Caco-2 (cell line): ENCODE measurements at regions of chr17 and their contacts with region 1.

Region 1: GRCh38 chr17:41521574-41522261 is 3.0 kb upstream of the KRT15 start:
- DNase-seq: peak; percentile 97 to 99
- H3K4me3 ChIP-seq: no peak overlapping the region
- H3K4me3 Mint-ChIP-seq: peak overlapping the region; percentile 68
- H3K27ac Mint-ChIP-seq: peak overlapping the region; percentile 97
- H3K4me1 ChIP-seq: peaks cover 66% of the 10 kb centered on the region
- H3K4me1 Mint-ChIP-seq: peaks cover 51% of the 10 kb centered on the region
- H3K27me3 ChIP-seq: no peaks in the 10 kb centered on the region
- H3K27me3 Mint-ChIP-seq: no peaks in the 10 kb centered on the region
- CTCF ChIP-seq: no peak

Region 2: GRCh38 chr17:40854159-40854814 is 667.4 kb before region 1 on chr17:
- CTCF ChIA-PET with region 1: no interaction called
- POLR2A ChIA-PET with region 1: no interaction called
- intact Hi-C with region 1: loop called (anchors 1 kb)
- DNase-seq: no peak
- H3K4me3 ChIP-seq: no peak overlapping the region
- H3K4me3 Mint-ChIP-seq: no peak overlapping the region
- H3K27ac Mint-ChIP-seq: no peak overlapping the region
- H3K4me1 ChIP-seq: peaks cover 13% of the 10 kb centered on the region
- H3K4me1 Mint-ChIP-seq: peaks cover 19% of the 10 kb centered on the region
- H3K27me3 ChIP-seq: no peaks in the 10 kb centered on the region
- H3K27me3 Mint-ChIP-seq: no peaks in the 10 kb centered on the region
- CTCF ChIP-seq: no peak

Region 3: DNA sequence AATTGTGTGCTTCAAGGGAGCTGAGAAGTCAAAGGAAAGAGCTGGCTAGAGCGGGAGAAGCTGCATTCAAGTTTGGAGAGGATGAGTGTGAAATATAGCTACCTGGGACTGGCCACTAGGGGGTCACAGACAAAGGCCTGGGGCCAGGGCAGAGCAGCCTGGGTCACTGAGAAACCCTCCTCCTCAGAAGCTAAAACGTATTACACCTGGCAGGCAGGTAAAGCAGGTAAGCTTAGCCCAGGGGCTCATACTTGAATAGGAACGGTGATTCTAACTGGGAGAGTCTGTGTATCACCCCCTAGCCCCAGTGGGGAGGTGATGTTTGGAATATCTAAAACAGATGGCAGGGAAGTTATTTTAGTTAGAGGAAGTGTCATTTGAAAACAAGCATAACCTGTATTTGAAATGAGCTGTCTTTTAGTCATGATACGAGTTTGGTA is 104.1 kb before region 1 on chr17:
- CTCF ChIA-PET with region 1: interaction called, 10 read pairs
- POLR2A ChIA-PET with region 1: no interaction called
- intact Hi-C with region 1: loop called (anchors 10 kb)
- DNase-seq: peak; percentile 63 to 65
- H3K4me3 ChIP-seq: no peak overlapping the region
- H3K4me3 Mint-ChIP-seq: no peak overlapping the region
- H3K27ac Mint-ChIP-seq: peak overlapping the region; percentile 5
- H3K4me1 ChIP-seq: peaks cover 60% of the 10 kb centered on the region
- H3K4me1 Mint-ChIP-seq: peaks cover 70% of the 10 kb centered on the region
- H3K27me3 ChIP-seq: no peaks in the 10 kb centered on the region
- H3K27me3 Mint-ChIP-seq: no peaks in the 10 kb centered on the region
- CTCF ChIP-seq: peak; percentile 70 to 71

Region 4: GRCh38 chr17:41505809-41506731 is 15.6 kb before region 1 on chr17:
- CTCF ChIA-PET with region 1: interaction called, 3 read pairs
- POLR2A ChIA-PET with region 1: interaction called, 3 read pairs
- intact Hi-C with region 1: loop called (anchors 1 kb)
- DNase-seq: peak in 1 of 2 experiments; percentile 74
- H3K4me3 ChIP-seq: no peak overlapping the region
- H3K4me3 Mint-ChIP-seq: no peak overlapping the region
- H3K27ac Mint-ChIP-seq: peak overlapping the region; percentile 79
- H3K4me1 ChIP-seq: peaks cover 42% of the 10 kb centered on the region
- H3K4me1 Mint-ChIP-seq: peaks cover 20% of the 10 kb centered on the region
- H3K27me3 ChIP-seq: no peaks in the 10 kb centered on the region
- H3K27me3 Mint-ChIP-seq: no peaks in the 10 kb centered on the region
- CTCF ChIP-seq: no peak

Region 5: GRCh38 chr17:41593311-41593981 is 71.7 kb after region 1 on chr17:
- CTCF ChIA-PET with region 1: no interaction called
- POLR2A ChIA-PET with region 1: no interaction called
- intact Hi-C with region 1: no loop called
- DNase-seq: no peak
- H3K4me3 ChIP-seq: no peak overlapping the region
- H3K4me3 Mint-ChIP-seq: no peak overlapping the region
- H3K27ac Mint-ChIP-seq: no peak overlapping the region
- H3K4me1 ChIP-seq: no peaks in the 10 kb centered on the region
- H3K4me1 Mint-ChIP-seq: peaks cover 7% of the 10 kb centered on the region
- H3K27me3 ChIP-seq: no peaks in the 10 kb centered on the region; the same call in 1 of the 2 replicates
- H3K27me3 Mint-ChIP-seq: peaks cover 12% of the 10 kb centered on the region
- CTCF ChIP-seq: no peak

Region 6: GRCh38 chr17:41695954-41696756 is 174.4 kb after region 1 on chr17:
- CTCF ChIA-PET with region 1: no interaction called
- POLR2A ChIA-PET with region 1: no interaction called
- intact Hi-C with region 1: no loop called
- DNase-seq: peak; percentile 69 to 76
- H3K4me3 ChIP-seq: no peak overlapping the region
- H3K4me3 Mint-ChIP-seq: no peak overlapping the region
- H3K27ac Mint-ChIP-seq: peak overlapping the region; percentile 12
- H3K4me1 ChIP-seq: no peaks in the 10 kb centered on the region
- H3K4me1 Mint-ChIP-seq: peaks cover 10% of the 10 kb centered on the region
- H3K27me3 ChIP-seq: no peaks in the 10 kb centered on the region
- H3K27me3 Mint-ChIP-seq: no peaks in the 10 kb centered on the region
- CTCF ChIP-seq: peak; percentile 78 to 89